Common myeloid progenitor, CD34-positive (primary cell): ENCODE measurements at regions of chr14 and their contacts with region 1.

Region 1: GRCh38 chr14:76918751-76919543 is 92.7 kb downstream of the LRRC74A start:
- DNase-seq: peak in 2 of 3 donors; percentile 82 to 85
- H3K4me3 ChIP-seq: peak overlapping the region in 2 of 7 experiments; percentile 8 to 37
- H3K27ac ChIP-seq: peak overlapping the region; percentile 11 to 50
- H3K4me1 ChIP-seq: peaks cover 8 to 94% (median 81%) of the 10 kb centered on the region in 4 experiments
- H3K27me3 ChIP-seq: no peaks in the 10 kb centered on the region

Region 2: DNA sequence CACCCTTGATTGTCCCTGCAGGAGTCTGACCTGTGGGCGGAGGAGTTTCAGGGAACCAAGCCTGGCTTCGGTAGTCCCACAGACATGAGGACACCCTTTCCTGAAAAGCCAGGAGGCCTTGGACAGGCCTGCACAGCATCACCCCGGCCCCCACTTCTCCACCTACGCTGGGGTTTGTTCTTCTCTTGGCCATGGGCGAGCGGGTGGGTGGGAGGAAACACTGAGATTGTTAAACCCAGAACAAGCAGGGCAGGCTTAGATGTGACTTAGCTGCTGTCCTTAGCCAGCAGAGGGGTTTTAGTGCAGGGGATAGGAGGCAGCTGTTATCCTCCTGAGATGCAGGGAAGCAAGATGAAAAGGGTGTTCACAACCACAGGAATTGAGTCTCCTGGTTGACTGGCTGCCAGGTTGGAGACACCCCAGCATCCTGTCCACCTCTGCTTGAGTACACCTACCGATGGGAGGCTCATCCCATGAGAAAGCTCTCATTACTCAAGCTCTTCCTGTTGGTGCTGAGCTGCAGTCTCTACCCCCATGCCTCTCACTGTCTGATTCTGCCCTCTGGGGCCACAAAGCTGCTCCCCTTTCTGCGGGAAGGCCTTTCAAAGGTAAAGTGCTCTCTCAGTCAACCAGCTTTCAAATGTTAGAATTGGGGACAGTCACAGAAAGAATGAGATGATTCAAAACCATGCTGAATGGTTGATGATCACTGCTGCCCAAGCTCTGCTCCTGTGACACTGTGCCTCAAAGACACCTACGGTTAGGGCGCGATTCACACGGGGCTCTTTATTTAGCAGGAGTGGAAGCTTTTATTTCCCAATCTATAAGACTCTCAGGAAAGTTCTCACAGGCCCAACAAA is 23.2 kb after region 1 on chr14:
- CTCF ChIA-PET with region 1: interaction called, 16 read pairs
- POLR2A ChIA-PET with region 1: no interaction called
- DNase-seq: no peak
- H3K4me3 ChIP-seq: no peak overlapping the region
- H3K27ac ChIP-seq: no peak overlapping the region
- H3K4me1 ChIP-seq: peaks cover 0 to 13% (median 8%) of the 10 kb centered on the region in 4 experiments
- H3K27me3 ChIP-seq: no peaks in the 10 kb centered on the region

Region 3: DNA sequence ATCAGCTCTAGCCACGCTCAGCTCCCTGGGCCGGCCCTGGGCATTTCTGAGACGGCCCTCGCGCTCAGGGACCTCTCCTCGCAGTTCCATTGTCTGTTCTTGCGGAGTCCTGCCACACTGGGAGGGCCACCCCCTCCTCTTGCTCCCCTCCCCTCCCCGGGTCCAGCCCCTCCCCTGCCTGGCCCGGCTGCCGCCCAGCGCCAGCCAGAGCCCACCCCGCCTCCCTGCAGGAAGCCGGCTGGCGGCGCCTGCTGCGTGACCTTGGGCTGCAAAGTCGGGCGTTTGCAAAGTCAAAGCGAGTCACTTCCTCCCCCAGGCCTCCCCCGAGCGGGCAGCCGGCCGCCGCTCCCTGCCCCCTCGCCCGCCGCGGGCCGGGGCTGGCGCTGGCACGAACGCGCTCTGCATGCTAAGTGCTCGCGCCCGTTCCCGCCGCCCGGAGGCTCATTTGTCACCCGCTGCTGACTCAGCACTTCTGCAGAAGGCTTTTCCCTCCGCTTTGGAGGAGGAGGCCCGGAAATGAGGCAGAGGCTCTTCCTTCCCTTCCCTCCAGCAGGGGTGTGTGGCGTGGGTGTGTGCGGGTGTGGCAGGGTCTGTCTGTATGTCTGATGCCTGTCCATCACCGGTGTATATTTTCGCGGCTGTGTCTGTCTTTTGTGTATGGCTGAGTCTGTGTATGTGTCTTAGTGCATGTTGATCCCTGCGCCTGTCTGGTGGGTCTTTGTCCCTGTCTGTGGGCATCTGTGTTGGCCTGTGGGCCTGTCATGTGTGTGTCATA is 37.6 kb after region 1 on chr14:
- CTCF ChIA-PET with region 1: interaction called, 18 read pairs
- POLR2A ChIA-PET with region 1: interaction called, 4 read pairs
- DNase-seq: peak; percentile 93 to 97 (median 97)
- H3K4me3 ChIP-seq: peak overlapping the region in 6 of 7 experiments; percentile 36 to 72 (median 60)
- H3K27ac ChIP-seq: peak overlapping the region; percentile 19 to 70
- H3K4me1 ChIP-seq: peaks cover 2 to 75% (median 62%) of the 10 kb centered on the region in 4 experiments
- H3K27me3 ChIP-seq: no peaks in the 10 kb centered on the region

Region 4: GRCh38 chr14:77028384-77029231 is 109.7 kb after region 1 on chr14 and contains the start of gene IRF2BPL:
- CTCF ChIA-PET with region 1: interaction called, 421 read pairs
- POLR2A ChIA-PET with region 1: no interaction called
- DNase-seq: peak; percentile 91 to 96 (median 96)
- H3K4me3 ChIP-seq: peak within 1 kb of the TSS; percentile 67 to 82 (median 76)
- H3K27ac ChIP-seq: peak within 1 kb of the TSS; percentile 66 to 85
- H3K4me1 ChIP-seq: peaks cover 2 to 74% (median 56%) of the 10 kb centered on the region in 4 experiments
- H3K27me3 ChIP-seq: no peaks in the 10 kb centered on the region